ENCODE measurements at regions of chr11 and their contacts with region 1.

Region 1: GRCh38 chr11:87037450-87038234 is at the start of gene TMEM135:
- DNase-seq: peak; percentile 97 to 98 (median 97)
- ATAC-seq: peak; percentile 95
- H3K4me3 ChIP-seq: peak within 1 kb of the TSS; percentile 81
- H3K27ac ChIP-seq: peak within 1 kb of the TSS; percentile 92
- H3K4me1 ChIP-seq: peaks cover 10 to 23% of the 10 kb centered on the region in 2 experiments
- H3K27me3 ChIP-seq: no peaks in the 10 kb centered on the region
- CTCF ChIP-seq: peak in 2 of 3 experiments; percentile 18 to 25; a peak in 3 of 6 replicates
- EP300 ChIP-seq: peak; percentile 33
- POLR2A ChIP-seq: peak; percentile 82
- RAD21 ChIP-seq: peak in 1 of 2 experiments; percentile 25; a peak in 3 of 4 replicates
- polyA plus RNA-seq, gene TMEM135: 24.0 to 24.9 TPM

Region 2: DNA sequence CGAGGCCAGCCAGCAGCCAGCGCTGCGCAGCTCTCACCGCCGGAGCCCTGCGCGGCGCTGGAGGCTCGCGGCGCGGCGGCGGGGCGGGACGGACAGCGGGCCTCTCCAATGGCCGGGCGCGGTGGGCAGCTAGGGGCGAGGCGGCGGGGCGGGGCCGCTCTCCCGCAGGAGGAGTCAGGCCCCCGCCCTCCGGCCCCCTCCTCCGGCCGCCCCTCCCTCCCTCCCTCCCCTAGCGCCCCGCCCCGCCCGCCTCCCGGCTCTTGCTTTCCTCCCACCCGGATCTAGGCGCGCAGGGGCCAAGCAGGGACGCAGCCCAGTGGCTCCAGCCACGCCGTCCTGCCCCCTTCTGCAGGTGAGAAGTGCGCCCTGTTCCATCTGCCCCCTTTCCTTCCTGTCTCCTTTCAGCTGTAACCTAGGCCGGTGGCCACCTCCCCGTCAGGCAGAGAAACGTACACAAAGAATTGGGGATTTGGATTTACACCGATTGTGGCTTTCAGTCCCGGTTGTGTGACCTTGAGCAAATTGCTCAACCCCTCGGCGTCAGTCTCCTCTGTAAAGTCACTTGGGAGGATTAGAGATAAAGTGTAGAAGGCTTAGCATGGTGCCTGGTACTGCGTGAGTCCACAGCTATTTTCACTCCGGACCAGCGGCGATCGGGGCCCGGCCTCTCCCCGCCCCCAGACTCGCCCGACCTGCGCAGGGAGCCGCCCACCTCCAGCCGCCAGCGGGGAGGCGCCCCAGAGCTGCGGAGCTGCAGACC is 82.1 kb before region 1 on chr11 and contains the start of gene FZD4:
- CTCF ChIA-PET with region 1: no interaction called
- POLR2A ChIA-PET with region 1: interaction called, 3 read pairs
- in situ Hi-C with region 1: no loop called
- intact Hi-C with region 1: loop called (anchors 5 kb)
- DNase-seq: peak; percentile 94 to 98 (median 98)
- ATAC-seq: peak; percentile 96
- H3K4me3 ChIP-seq: peak within 1 kb of the TSS; percentile 68
- H3K27ac ChIP-seq: peak within 1 kb of the TSS; percentile 75
- H3K4me1 ChIP-seq: peaks cover 18 to 29% of the 10 kb centered on the region in 2 experiments
- H3K27me3 ChIP-seq: no peaks in the 10 kb centered on the region
- CTCF ChIP-seq: peak; percentile 33 to 55 (median 42); a peak in 4 of 6 replicates
- EP300 ChIP-seq: no peak
- POLR2A ChIP-seq: peak; percentile 64
- RAD21 ChIP-seq: peak; percentile 52 to 62
- polyA plus RNA-seq, gene FZD4: 1.2 to 1.4 TPM

Region 3: GRCh38 chr11:86983021-86983488 is 54.6 kb before region 1 on chr11:
- CTCF ChIA-PET with region 1: no interaction called
- POLR2A ChIA-PET with region 1: no interaction called
- in situ Hi-C with region 1: no loop called
- intact Hi-C with region 1: no loop called
- DNase-seq: no peak
- ATAC-seq: no peak
- H3K4me3 ChIP-seq: no peak overlapping the region
- H3K27ac ChIP-seq: no peak overlapping the region
- H3K4me1 ChIP-seq: no peaks in the 10 kb centered on the region; a peak in 1 of 5 replicates
- H3K27me3 ChIP-seq: no peaks in the 10 kb centered on the region
- CTCF ChIP-seq: no peak
- EP300 ChIP-seq: no peak
- POLR2A ChIP-seq: no peak
- RAD21 ChIP-seq: no peak

Region 4: DNA sequence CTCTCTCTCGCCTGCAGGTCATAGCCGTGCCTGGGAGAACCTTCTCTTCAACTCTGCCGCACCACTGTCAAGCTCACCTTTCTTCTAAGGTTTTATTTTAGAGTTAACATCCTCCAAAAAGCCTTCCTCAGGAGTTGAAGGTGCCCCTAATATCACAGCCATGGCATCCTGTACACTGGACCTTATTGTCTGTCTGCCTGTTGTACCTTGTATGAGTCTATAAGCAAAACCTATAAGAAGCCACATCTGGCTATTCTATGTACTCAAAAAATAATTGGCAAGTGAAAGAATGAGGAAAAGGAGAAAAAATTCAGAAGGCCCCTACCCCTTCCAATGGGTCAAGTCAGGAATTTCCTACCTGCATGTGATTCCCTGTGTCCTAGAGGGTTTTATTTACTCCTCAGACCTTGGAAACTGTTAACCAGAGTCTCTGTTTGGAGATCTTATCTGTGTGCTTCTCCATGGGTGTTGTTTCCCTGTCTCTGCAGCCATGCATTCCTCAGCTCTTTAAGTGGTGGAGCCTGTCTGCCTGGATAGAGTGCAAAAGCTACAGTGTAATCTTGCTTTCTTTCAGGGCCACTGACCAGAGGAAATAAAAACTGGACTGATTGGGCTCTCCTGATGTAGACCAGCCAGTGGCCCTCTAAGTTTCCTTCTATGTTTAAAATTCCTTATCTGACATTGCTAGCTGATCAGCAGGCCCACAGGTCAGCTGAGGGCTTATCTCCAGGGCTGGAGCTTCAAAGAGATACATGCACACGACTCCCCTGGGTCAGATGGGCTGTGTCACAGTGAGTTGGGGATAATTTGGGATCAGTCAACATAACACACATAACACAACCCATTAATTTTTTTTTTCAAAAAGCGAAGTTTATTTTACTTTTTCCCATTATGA is 37.5 kb before region 1 on chr11:
- CTCF ChIA-PET with region 1: no interaction called
- POLR2A ChIA-PET with region 1: interaction called, 6 read pairs
- in situ Hi-C with region 1: no loop called
- intact Hi-C with region 1: loop called (anchors 1 kb)
- DNase-seq: peak; percentile 68 to 96 (median 81)
- ATAC-seq: peak; percentile 91
- H3K4me3 ChIP-seq: peak overlapping the region; percentile 12; the same call in 1 of the 2 replicates
- H3K27ac ChIP-seq: peak overlapping the region; percentile 87
- H3K4me1 ChIP-seq: peaks cover 18 to 42% of the 10 kb centered on the region in 2 experiments; a peak in 4 of 5 replicates
- H3K27me3 ChIP-seq: no peaks in the 10 kb centered on the region
- CTCF ChIP-seq: no peak
- EP300 ChIP-seq: peak; percentile 96
- POLR2A ChIP-seq: peak; percentile 53
- RAD21 ChIP-seq: peak; percentile 15 to 29; a peak in 3 of 4 replicates

Measured in K562 (cell line).